B cell (primary cell): ENCODE measurements at regions of chr2 and their contacts with region 1.

Region 1: GRCh38 chr2:241149925-241150659 is at the start of gene PPP1R7:
- DNase-seq: peak; percentile 97
- ATAC-seq: peak; percentile 80
- H3K4me3 ChIP-seq: peak within 1 kb of the TSS; percentile 57 to 94 (median 84)
- H3K4me3 Mint-ChIP-seq: peak within 1 kb of the TSS; percentile 96
- H3K27ac ChIP-seq: peak within 1 kb of the TSS; percentile 12 to 80
- H3K27ac Mint-ChIP-seq: peak within 1 kb of the TSS; percentile 93
- H3K4me1 ChIP-seq: peaks cover 12 to 20% of the 10 kb centered on the region in 2 donors
- H3K4me1 Mint-ChIP-seq: peaks cover 35% of the 10 kb centered on the region
- H3K27me3 ChIP-seq: no peaks in the 10 kb centered on the region
- H3K27me3 Mint-ChIP-seq: no peaks in the 10 kb centered on the region
- CTCF ChIP-seq: peak; percentile 72
- total RNA-seq, gene PPP1R7: 50.9 and 51.7 TPM in 2 replicates

Region 2: DNA sequence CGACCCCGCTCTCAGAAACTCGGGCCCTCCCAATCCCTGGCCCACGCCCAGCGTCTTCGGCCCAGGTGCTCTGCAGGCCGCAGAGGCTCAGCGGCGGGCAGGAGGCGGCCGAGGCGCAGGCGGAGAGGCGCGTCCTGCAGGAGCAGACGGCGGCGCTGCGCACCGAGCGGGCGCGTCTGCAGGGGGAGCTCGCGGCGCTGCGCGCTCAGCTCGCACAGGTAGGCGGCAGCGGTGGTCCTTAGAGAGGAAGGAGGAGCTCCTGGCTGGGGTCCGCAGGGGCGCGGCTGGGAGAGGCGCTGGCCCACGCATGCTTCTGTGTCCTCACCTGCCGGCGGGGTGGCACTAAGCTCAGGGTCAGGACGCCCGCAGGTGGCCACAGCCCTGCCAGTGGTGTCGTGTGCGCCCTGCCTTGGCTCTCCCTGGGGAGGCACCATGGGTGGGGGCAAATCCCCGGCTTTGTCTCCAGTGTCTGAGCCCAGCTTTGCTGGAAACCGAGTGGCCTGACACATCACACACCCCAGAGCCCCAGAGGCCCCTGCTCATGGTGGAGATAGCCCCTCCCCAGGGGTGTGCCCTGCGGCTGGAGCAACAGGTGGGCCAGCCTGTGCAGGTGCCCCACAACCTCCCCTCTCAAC is 166.6 kb before region 1 on chr2:
- CTCF ChIA-PET with region 1: interaction called, 33 read pairs
- POLR2A ChIA-PET with region 1: no interaction called
- intact Hi-C with region 1: loop called (anchors 5 kb)
- DNase-seq: peak; percentile 70
- ATAC-seq: peak; percentile 83
- H3K4me3 ChIP-seq: no peak overlapping the region
- H3K4me3 Mint-ChIP-seq: no peak overlapping the region
- H3K27ac ChIP-seq: no peak overlapping the region
- H3K27ac Mint-ChIP-seq: no peak overlapping the region
- H3K4me1 ChIP-seq: peaks cover 0 to 4% of the 10 kb centered on the region in 2 donors
- H3K4me1 Mint-ChIP-seq: peaks cover 3% of the 10 kb centered on the region
- H3K27me3 ChIP-seq: peaks cover 0 to 10% (median 0%) of the 10 kb centered on the region in 4 experiments
- H3K27me3 Mint-ChIP-seq: peaks cover 3% of the 10 kb centered on the region
- CTCF ChIP-seq: peak; percentile 67

Region 3: GRCh38 chr2:241036397-241036963 is 113.6 kb before region 1 on chr2:
- CTCF ChIA-PET with region 1: no interaction called
- POLR2A ChIA-PET with region 1: no interaction called
- intact Hi-C with region 1: loop called (anchors 1 kb)
- DNase-seq: peak; percentile 87
- ATAC-seq: peak; percentile 69
- H3K4me3 ChIP-seq: peak overlapping the region in 4 of 5 experiments; percentile 39 to 79 (median 65)
- H3K4me3 Mint-ChIP-seq: peak overlapping the region; percentile 92
- H3K27ac ChIP-seq: peak overlapping the region; percentile 68 to 79
- H3K27ac Mint-ChIP-seq: peak overlapping the region; percentile 94
- H3K4me1 ChIP-seq: peaks cover 38 to 59% of the 10 kb centered on the region in 2 donors
- H3K4me1 Mint-ChIP-seq: peaks cover 57% of the 10 kb centered on the region
- H3K27me3 ChIP-seq: no peaks in the 10 kb centered on the region
- H3K27me3 Mint-ChIP-seq: no peaks in the 10 kb centered on the region
- CTCF ChIP-seq: no peak

Region 4: DNA sequence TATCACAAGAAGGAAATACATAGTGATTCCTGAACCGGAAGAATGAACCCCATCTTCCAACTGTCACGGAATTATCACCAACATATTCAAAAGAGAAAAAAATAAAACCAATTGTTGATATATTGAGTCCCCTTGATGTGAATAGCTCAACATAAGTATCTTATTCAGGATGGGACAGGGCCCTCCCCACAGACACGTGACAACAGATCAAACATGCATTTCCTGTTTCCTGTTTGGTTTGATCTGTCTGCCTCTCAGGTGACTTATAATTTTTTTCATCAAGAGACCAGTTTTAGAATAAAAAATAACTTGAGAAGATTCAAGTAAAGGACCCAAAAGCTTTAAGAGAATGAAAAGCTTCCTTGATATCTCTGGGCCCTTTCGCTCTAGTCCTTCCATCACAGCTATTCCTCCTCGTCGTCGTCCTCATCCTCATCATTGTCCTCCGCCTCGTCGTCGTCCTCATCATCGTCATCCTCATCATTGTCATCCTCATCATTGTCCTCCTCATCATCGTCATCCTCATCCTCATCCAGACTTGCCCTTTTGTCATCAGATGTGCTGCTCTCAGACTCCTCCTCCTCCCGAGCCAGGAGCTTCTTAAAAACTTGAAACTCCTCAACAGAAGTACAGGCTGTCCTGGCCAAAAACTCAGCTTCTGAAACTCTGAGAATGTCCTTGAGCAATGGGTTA is 54.4 kb before region 1 on chr2:
- CTCF ChIA-PET with region 1: interaction called, 31 read pairs
- POLR2A ChIA-PET with region 1: interaction called, 12 read pairs
- intact Hi-C with region 1: no loop called
- DNase-seq: peak; percentile 59
- ATAC-seq: no peak
- H3K4me3 ChIP-seq: no peak overlapping the region
- H3K4me3 Mint-ChIP-seq: peak overlapping the region; percentile 24
- H3K27ac ChIP-seq: peak overlapping the region in 1 of 2 donors; percentile 49
- H3K27ac Mint-ChIP-seq: peak overlapping the region; percentile 33
- H3K4me1 ChIP-seq: peaks cover 39 to 51% of the 10 kb centered on the region in 2 donors
- H3K4me1 Mint-ChIP-seq: peaks cover 54% of the 10 kb centered on the region
- H3K27me3 ChIP-seq: no peaks in the 10 kb centered on the region
- H3K27me3 Mint-ChIP-seq: no peaks in the 10 kb centered on the region
- CTCF ChIP-seq: no peak

Region 5: GRCh38 chr2:241110607-241111439 is 39.3 kb before region 1 on chr2:
- CTCF ChIA-PET with region 1: interaction called, 16 read pairs
- POLR2A ChIA-PET with region 1: interaction called, 10 read pairs
- intact Hi-C with region 1: loop called (anchors 1 kb)
- DNase-seq: peak; percentile 88
- ATAC-seq: peak; percentile 79
- H3K4me3 ChIP-seq: peak overlapping the region in 1 of 5 experiments; percentile 3
- H3K4me3 Mint-ChIP-seq: peak overlapping the region; percentile 74
- H3K27ac ChIP-seq: peak overlapping the region; percentile 89 to 95
- H3K27ac Mint-ChIP-seq: peak overlapping the region; percentile 97
- H3K4me1 ChIP-seq: peaks cover 35 to 59% of the 10 kb centered on the region in 2 donors
- H3K4me1 Mint-ChIP-seq: peaks cover 53% of the 10 kb centered on the region
- H3K27me3 ChIP-seq: no peaks in the 10 kb centered on the region
- H3K27me3 Mint-ChIP-seq: no peaks in the 10 kb centered on the region
- CTCF ChIP-seq: no peak

Region 6: DNA sequence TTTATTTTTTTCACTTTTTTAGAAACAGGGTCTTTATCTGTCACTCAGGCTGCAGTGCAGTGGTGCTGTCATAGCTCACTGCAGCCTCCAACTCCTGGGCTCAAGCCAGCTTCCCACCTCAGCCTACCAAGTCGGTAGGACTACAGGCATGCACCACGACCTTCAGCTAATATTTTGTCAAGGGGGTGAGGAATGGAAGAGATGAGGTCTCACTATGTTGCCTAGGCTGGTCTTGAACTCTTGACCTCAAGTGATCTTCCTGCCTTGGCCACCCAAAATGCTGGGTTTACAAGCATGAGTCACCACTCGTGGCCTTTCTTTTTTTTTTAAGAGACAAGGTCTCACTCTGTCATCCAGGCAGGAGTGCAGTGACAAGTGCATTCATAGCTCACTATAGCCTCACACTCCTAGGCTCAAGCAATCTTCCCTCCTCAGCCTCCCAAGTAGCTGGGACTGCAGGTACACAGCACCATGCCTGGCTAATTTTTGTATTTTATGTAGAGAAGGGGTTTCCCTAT is 13.6 kb after region 1 on chr2:
- CTCF ChIA-PET with region 1: no interaction called
- POLR2A ChIA-PET with region 1: no interaction called
- intact Hi-C with region 1: no loop called
- DNase-seq: no peak
- ATAC-seq: no peak
- H3K4me3 ChIP-seq: no peak overlapping the region
- H3K4me3 Mint-ChIP-seq: no peak overlapping the region
- H3K27ac ChIP-seq: no peak overlapping the region
- H3K27ac Mint-ChIP-seq: no peak overlapping the region
- H3K4me1 ChIP-seq: no peaks in the 10 kb centered on the region
- H3K4me1 Mint-ChIP-seq: no peaks in the 10 kb centered on the region
- H3K27me3 ChIP-seq: no peaks in the 10 kb centered on the region
- H3K27me3 Mint-ChIP-seq: no peaks in the 10 kb centered on the region
- CTCF ChIP-seq: no peak

Region 7: DNA sequence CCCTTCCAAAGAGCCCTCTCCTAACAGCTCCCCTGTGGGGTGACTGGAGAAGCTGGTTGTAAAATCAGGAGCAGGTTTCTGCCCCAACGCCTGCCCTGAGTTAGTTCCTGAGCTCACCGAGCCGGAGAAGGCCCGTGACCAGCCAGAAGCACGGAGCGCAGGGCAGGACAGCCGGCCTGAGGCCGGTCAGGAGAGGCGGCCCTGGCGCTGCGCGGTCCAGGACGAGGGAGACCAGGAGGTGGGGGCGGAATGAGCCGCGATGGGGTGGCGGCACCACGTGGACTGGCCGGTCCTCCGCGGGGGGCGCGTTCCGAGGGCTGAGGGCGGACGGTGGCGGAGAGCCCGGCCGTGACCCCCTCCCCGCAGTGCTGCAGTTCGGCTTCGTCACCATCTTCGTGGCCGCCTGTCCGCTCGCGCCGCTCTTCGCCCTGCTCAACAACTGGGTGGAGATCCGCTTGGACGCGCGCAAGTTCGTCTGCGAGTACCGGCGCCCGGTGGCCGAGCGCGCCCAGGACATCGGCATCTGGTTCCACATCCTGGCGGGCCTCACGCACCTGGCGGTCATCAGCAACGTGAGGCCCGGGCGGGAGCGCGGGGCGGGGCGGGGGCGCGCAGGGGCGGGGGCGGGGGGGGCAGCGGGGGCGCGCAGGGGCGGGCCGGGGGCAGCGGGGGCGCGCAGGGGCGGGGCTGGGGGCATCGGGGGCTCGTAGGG is 67.4 kb after region 1 on chr2:
- CTCF ChIA-PET with region 1: interaction called, 4 read pairs
- POLR2A ChIA-PET with region 1: no interaction called
- intact Hi-C with region 1: loop called (anchors 5 kb)
- DNase-seq: peak; percentile 80
- ATAC-seq: peak; percentile 68
- H3K4me3 ChIP-seq: peak overlapping the region in 4 of 5 experiments; percentile 35 to 56 (median 45)
- H3K4me3 Mint-ChIP-seq: peak overlapping the region; percentile 82
- H3K27ac ChIP-seq: peak overlapping the region in 1 of 2 donors; percentile 23
- H3K27ac Mint-ChIP-seq: peak overlapping the region; percentile 73
- H3K4me1 ChIP-seq: peaks cover 10 to 12% of the 10 kb centered on the region in 2 donors
- H3K4me1 Mint-ChIP-seq: peaks cover 14% of the 10 kb centered on the region
- H3K27me3 ChIP-seq: peaks cover 0 to 2% (median 0%) of the 10 kb centered on the region in 4 experiments
- H3K27me3 Mint-ChIP-seq: no peaks in the 10 kb centered on the region
- CTCF ChIP-seq: no peak

Region 8: GRCh38 chr2:241355983-241356870 is 206.1 kb after region 1 on chr2 and contains the start of gene FARP2:
- CTCF ChIA-PET with region 1: no interaction called
- POLR2A ChIA-PET with region 1: interaction called, 3 read pairs
- intact Hi-C with region 1: loop called (anchors 5 kb)
- DNase-seq: peak; percentile 99
- ATAC-seq: peak; percentile 87
- H3K4me3 ChIP-seq: peak within 1 kb of the TSS; percentile 51 to 80 (median 77)
- H3K4me3 Mint-ChIP-seq: peak within 1 kb of the TSS; percentile 90
- H3K27ac ChIP-seq: peak within 1 kb of the TSS; percentile 54 to 82
- H3K27ac Mint-ChIP-seq: peak within 1 kb of the TSS; percentile 96
- H3K4me1 ChIP-seq: peaks cover 33 to 38% of the 10 kb centered on the region in 2 donors
- H3K4me1 Mint-ChIP-seq: peaks cover 39% of the 10 kb centered on the region
- H3K27me3 ChIP-seq: no peaks in the 10 kb centered on the region
- H3K27me3 Mint-ChIP-seq: no peaks in the 10 kb centered on the region
- CTCF ChIP-seq: no peak
- total RNA-seq, gene FARP2: 114 and 151 TPM in 2 replicates